ENCODE measurements at regions of chr12 and their contacts with region 1.

Region 1: DNA sequence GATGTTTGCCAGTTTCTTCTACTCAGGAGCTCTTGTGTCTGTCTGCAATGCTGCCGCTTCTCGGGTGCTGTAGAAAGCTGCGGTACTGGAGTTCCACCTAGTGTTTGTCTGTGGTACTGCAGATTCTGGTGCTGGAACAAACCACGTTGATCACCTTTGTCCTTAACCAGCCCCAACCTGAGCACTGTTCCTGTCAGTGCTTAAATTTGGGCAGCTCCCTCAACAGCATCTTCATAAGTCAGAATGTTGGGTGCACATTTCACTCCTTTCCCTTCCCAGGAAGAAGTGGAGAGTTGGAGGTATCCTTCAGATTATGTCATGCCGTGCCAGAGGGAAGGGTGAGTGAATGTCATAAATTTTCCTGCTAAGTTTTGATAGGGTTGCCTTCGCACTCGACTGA is 48.7 kb upstream of the LALBA start:
- DNase-seq: peak; percentile 74
- CTCF ChIP-seq: peak; percentile 93

Region 2: GRCh38 chr12:48183091-48183875 is 435.3 kb before region 1 on chr12 and contains the start of gene CCDC184:
- CTCF ChIA-PET with region 1: interaction called, 15 read pairs
- POLR2A ChIA-PET with region 1: no interaction called
- DNase-seq: peak; percentile 82
- CTCF ChIP-seq: peak; percentile 33

Region 3: GRCh38 chr12:48197971-48198671 is 420.4 kb before region 1 on chr12:
- CTCF ChIA-PET with region 1: interaction called, 29 read pairs
- POLR2A ChIA-PET with region 1: no interaction called
- DNase-seq: peak; percentile 96
- CTCF ChIP-seq: no peak

Region 4: DNA sequence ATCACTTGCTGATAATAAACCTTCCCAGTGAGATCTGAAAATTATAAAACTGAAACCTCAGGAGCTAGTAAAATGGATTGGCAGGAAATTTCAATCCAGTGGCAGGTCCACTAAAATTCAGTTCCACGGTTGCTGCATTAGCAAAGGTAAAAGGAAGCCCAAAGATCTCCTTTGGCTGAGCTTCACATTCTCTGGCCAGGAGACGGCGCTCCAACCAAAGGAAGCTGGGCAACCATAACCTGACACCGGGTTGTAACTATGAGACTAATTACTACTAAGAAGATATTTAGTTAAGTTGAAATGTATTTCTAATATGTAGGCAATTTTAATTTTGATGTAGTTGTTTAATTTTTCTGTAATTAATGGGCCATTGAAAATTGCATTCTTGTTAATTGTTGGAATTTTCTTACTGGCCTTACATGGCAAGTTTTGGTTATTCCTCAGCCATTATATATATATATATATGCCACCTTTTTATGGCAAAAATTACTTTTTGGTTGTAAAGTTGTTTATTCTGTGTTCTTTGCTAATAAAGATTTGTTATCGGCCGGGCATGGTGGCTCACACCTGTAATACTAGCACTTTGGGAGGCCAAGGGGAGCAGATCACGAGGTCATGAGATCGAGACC is 76.1 kb before region 1 on chr12:
- CTCF ChIA-PET with region 1: interaction called, 63 read pairs
- POLR2A ChIA-PET with region 1: no interaction called
- DNase-seq: peak; percentile 42
- CTCF ChIP-seq: peak; percentile 54

Region 5: GRCh38 chr12:48600552-48600951 is 18.0 kb before region 1 on chr12:
- CTCF ChIA-PET with region 1: interaction called, 10 read pairs
- POLR2A ChIA-PET with region 1: no interaction called
- DNase-seq: no peak
- CTCF ChIP-seq: no peak

Region 6: DNA sequence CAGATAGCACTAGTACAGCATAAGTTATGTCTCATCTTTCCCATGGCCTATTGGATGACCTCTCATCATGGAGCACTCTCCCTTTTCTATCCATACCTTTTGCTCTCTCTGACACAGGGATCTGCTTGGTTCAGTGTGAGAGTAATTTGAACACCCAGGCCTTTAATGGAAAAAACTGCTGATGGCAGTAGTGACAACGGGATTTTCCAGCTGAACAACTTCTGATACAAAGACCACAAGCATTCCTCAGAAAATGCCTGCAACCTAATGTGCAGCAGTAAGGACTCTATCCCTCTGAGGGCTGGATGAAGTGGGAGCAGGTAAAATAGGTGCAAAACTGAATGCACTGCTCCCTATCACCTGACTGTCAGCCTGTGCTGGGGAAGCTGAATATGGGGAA is 12.5 kb after region 1 on chr12:
- CTCF ChIA-PET with region 1: interaction called, 25 read pairs
- POLR2A ChIA-PET with region 1: no interaction called
- DNase-seq: no peak
- CTCF ChIP-seq: no peak

Measured in GM10248 (cell line).